ENCODE measurements at regions of chr18 and their contacts with region 1.

Region 1: DNA sequence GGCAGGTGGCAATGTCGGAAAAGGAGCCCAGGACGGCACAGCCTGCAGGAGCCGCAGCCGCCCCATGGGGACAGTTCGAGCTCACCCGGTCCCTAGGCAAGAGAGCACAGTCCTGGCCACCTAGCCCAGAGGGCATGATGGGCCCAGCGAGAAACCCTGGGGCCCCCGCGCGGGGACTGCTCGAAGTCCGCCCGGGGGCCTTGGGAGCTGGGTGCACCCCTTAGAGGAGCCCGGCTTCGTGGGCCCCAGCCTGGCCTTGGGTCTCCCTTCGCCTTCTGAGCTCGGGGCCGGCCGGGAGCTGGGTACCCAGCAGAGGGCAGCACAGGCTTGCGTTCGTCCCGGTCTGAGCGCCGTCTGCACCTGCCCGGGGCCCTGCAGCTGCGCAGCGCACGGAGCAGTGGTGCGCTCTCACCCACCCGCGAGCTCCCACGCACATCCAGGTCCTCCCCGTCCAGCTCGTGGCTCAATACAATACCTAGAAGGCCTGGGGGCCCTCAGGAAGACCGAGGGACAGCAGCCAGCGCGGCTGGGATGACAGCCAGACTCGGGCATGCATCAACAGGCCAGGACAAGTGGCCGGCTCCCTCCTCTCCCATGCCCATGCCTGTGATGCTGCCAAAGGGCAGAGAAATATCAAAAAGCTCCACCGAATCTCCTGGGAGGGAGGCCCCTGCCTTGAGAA is 96.2 kb upstream of the ZNF532 start:
- DNase-seq: peak; percentile 53 to 69
- ATAC-seq: peak; percentile 82 to 87
- H3K4me3 ChIP-seq: peak overlapping the region; percentile 44 to 67 (median 52)
- H3K27ac ChIP-seq: peak overlapping the region in 3 of 4 donors; percentile 25 to 33 (median 28)
- H3K4me1 ChIP-seq: peaks cover 3 to 13% of the 10 kb centered on the region in 2 donors
- H3K27me3 ChIP-seq: no peaks in the 10 kb centered on the region
- CTCF ChIP-seq: peak; percentile 69 to 93 (median 90)
- POLR2A ChIP-seq: no peak

Region 2: GRCh38 chr18:58671111-58671631 is 97.3 kb before region 1 on chr18 and contains the start of gene MALT1:
- in situ Hi-C with region 1: loop called in 1 of 4 experiments (anchors 10 kb)
- intact Hi-C with region 1: loop called (anchors 2 kb)
- DNase-seq: peak; percentile 88 to 89
- ATAC-seq: peak; percentile 92 to 95
- H3K4me3 ChIP-seq: peak within 1 kb of the TSS; percentile 58 to 68 (median 66)
- H3K27ac ChIP-seq: peak within 1 kb of the TSS; percentile 86 to 96 (median 94)
- H3K4me1 ChIP-seq: peaks cover 15 to 22% of the 10 kb centered on the region in 2 donors
- H3K27me3 ChIP-seq: no peaks in the 10 kb centered on the region
- CTCF ChIP-seq: no peak
- POLR2A ChIP-seq: peak; percentile 90 to 95
- total RNA-seq, gene MALT1: 9.9 to 24.8 (median 12.9) TPM

Measured in gastrocnemius medialis (tissue), 4 donors.